Heart right ventricle (tissue), 16 donors: ENCODE measurements at regions of chr12 and their contacts with region 1.

Region 1: GRCh38 chr12:74317078-74317601 is 220.5 kb upstream of the ATXN7L3B start:
- DNase-seq: peak in 1 of 2 donors; percentile 19
- ATAC-seq: peak in 7 of 8 donors; percentile 47 to 96 (median 63)
- H3K4me3 ChIP-seq: no peak overlapping the region
- H3K27ac ChIP-seq: no peak overlapping the region
- H3K4me1 ChIP-seq: no peaks in the 10 kb centered on the region
- H3K27me3 ChIP-seq: no peaks in the 10 kb centered on the region
- CTCF ChIP-seq: peak in 6 of 9 donors; percentile 12 to 47 (median 36)

Region 2: DNA sequence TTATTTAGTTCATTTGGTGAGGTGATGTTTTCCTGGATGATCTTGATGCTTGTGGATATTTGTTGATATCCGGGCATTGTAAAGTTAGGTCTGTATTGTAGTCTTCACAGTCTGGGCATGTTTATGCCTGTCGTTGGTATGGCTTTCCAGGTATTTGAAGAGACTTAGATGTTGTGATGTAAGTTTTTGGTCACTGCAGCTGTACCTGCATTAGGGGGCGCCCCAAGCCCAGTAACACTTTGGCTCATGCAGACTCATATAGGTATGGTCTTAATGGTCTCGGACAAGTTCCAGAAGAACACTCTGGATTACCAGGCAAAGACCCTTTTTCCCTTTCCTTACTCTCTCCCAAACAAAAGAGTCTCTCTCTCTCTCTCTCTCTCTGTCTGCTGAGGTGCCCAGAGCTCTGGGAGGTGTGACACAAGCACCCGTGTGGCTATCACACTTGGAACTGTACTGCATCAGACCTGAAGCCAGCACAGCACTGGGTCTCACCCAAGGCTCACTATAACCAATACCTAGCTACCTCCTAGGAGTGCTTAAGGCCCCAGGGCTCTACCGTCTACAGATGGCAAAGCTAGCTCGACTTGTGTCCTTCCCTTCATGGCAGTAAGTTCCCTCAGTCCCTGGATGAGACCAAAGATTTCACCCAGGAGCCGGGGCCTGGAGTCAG is 205.3 kb before region 1 on chr12:
- intact Hi-C with region 1: loop called in 1 of 10 experiments (anchors 10 kb)
- DNase-seq: no peak
- ATAC-seq: no peak
- H3K4me3 ChIP-seq: no peak overlapping the region
- H3K27ac ChIP-seq: no peak overlapping the region
- H3K4me1 ChIP-seq: no peaks in the 10 kb centered on the region
- H3K27me3 ChIP-seq: no peaks in the 10 kb centered on the region
- CTCF ChIP-seq: peak in 5 of 9 donors; percentile 11 to 55 (median 31)

Region 3: DNA sequence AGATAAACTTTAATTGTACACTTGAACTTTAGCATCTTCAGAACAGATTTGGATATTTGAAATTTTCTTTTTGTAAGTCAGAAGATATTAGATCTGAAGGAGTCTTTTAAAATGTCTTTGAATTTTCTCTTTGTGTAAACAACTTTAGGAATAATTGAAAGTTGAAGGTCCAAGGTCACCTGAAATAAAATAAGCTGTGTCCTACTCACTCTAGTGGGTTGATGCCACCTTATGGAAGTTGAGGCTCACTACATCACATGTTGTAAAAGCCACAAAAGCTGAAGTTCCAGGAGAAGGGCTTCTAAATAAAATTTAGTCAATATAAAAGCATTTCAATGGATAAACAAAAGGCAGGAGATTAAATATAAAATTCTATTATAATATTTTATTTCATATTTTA is 98.5 kb after region 1 on chr12:
- intact Hi-C with region 1: loop called in 1 of 10 experiments (anchors 10 kb)
- DNase-seq: no peak
- ATAC-seq: no peak
- H3K4me3 ChIP-seq: no peak overlapping the region
- H3K27ac ChIP-seq: no peak overlapping the region
- H3K4me1 ChIP-seq: no peaks in the 10 kb centered on the region
- H3K27me3 ChIP-seq: no peaks in the 10 kb centered on the region
- CTCF ChIP-seq: peak in 7 of 9 donors; percentile 27 to 53 (median 40)